G401 (cell line): ENCODE measurements at regions of chr1 and their contacts with region 1.

Region 1: GRCh38 chr1:2044510-2045319 is 5.5 kb upstream of the PRKCZ start:
- DNase-seq: peak; percentile 71

Region 2: DNA sequence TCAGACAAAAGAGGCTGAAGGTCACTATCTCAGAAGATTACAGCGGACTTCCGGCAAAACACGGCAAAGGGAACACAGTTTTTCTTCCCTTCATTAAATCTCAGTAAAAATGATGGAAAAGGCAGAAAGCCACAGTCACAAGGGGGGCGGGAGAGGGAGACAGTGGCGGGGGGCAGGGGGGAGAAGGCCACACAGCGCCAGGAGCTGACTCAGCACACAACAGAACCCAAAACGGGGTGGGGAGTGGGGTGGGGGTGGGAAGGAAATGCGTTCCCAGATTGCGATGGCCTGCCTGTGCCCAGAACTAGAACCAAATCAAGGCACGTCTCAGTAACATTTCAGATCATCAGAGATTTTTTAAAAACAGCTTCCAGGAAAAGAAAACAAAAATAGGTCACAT is 54.5 kb before region 1 on chr1:
- in situ Hi-C with region 1: loop called (anchors 5 kb)
- DNase-seq: no peak

Region 3: DNA sequence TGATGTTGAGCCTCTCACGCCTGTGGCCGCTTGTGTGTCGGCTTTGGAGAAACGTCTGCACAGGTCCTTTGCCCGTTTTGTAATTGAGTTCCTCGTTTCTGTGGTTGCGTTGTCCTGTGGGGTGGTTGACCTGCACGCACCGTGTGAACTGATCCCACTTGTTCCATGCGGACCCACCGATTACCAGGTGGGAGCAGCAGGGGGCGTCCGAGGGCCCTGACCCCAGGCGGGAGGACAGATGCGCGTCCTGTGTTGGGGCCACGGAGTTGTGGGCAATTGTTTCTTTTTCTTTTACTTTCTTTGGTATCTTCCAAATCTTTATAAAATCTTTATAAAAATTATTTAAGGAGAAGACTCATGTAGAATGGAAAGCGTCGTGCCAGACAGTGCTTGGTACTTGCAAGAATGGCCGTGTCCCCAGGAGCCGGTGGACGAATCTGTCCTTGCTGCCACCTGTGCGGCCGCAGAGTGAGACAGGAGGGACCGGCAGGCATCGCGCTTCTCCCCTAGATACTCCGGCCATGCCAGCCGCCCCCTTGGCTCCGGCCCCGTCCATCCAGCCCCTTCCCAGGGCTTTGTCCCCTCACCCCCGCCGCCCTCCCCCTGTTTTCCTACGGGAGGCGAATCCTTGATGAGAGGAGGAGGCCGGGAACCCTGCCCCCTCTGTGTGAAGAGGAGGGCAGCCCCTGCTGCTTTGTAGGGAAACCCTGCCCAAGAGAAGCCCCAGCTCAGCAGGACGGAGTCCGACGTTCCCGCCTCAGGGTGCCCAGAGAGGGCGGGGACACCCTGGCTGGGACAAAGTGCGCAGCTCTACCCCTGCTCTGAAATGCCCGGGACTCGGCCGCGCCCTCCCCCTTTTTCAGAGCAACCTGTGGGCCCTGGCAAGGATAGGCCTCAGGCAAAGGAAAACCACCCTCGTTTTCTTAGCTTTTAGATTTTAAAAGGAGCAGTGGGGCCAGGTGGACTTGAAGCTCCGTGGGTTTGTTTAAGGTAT is 47.2 kb after region 1 on chr1:
- in situ Hi-C with region 1: no loop called
- DNase-seq: no peak